Transverse colon (tissue), 4 donors: ENCODE measurements at regions of chr17 and their contacts with region 1.

Region 1: DNA sequence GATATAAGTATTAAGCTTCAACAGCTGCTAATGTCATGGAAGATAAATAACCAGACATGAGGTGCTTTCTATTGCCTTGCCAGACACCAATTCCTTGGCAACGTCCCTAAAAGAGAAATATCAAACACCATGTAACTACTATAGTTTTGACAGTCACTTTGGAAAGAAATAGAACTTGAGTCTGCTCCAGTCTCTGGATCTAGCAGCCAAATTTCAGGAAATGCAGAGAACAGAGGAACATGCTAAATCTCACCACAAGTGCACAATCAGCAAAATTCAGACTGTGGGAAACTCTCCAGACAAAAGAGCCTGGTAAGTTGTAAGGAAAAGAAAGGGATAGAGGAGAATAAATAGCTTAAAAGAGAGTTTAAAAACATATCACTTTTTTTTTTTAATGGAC is 28.4 kb upstream of the TANC2 start:
- DNase-seq: no peak
- H3K4me3 ChIP-seq: no peak overlapping the region
- H3K27ac ChIP-seq: no peak overlapping the region
- H3K4me1 ChIP-seq: no peaks in the 10 kb centered on the region
- H3K27me3 ChIP-seq: peaks cover 9% of the 10 kb centered on the region
- CTCF ChIP-seq: no peak
- EP300 ChIP-seq: no peak
- POLR2A ChIP-seq: no peak

Region 2: GRCh38 chr17:63001451-63002312 is 64.1 kb after region 1 on chr17:
- in situ Hi-C with region 1: no loop called
- intact Hi-C with region 1: loop called (anchors 2 kb)
- DNase-seq: no peak
- H3K4me3 ChIP-seq: no peak overlapping the region
- H3K27ac ChIP-seq: no peak overlapping the region
- H3K4me1 ChIP-seq: no peaks in the 10 kb centered on the region
- H3K27me3 ChIP-seq: no peaks in the 10 kb centered on the region
- CTCF ChIP-seq: no peak
- EP300 ChIP-seq: no peak
- POLR2A ChIP-seq: no peak